ENCODE measurements at regions of chr20 and their contacts with region 1.

Region 1: GRCh38 chr20:37172836-37173235 is 6.3 kb upstream of the RPN2 start:
- DNase-seq: no peak
- H3K4me3 ChIP-seq: no peak overlapping the region
- H3K4me3 Mint-ChIP-seq: no peak overlapping the region
- H3K27ac ChIP-seq: no peak overlapping the region
- H3K27ac Mint-ChIP-seq: no peak overlapping the region
- H3K4me1 ChIP-seq: peaks cover 6% of the 10 kb centered on the region
- H3K4me1 Mint-ChIP-seq: peaks cover 0 to under 1% (median under 1%) of the 10 kb centered on the region in 4 donors
- H3K27me3 ChIP-seq: no peaks in the 10 kb centered on the region
- H3K27me3 Mint-ChIP-seq: no peaks in the 10 kb centered on the region

Region 2: GRCh38 chr20:37185686-37186085 is 12.8 kb after region 1 on chr20:
- CTCF ChIA-PET with region 1: interaction called, 99 read pairs
- POLR2A ChIA-PET with region 1: interaction called, 62 read pairs
- intact Hi-C with region 1: loop called (anchors 1 kb)
- DNase-seq: no peak
- H3K4me3 ChIP-seq: no peak overlapping the region
- H3K4me3 Mint-ChIP-seq: peak overlapping the region in 1 of 8 donors; percentile 30
- H3K27ac ChIP-seq: no peak overlapping the region
- H3K27ac Mint-ChIP-seq: peak overlapping the region in 3 of 7 donors; percentile 27 to 87 (median 30)
- H3K4me1 ChIP-seq: peaks cover 74% of the 10 kb centered on the region
- H3K4me1 Mint-ChIP-seq: peaks cover 49 to 79% (median 63%) of the 10 kb centered on the region in 4 donors
- H3K27me3 ChIP-seq: no peaks in the 10 kb centered on the region
- H3K27me3 Mint-ChIP-seq: no peaks in the 10 kb centered on the region

Measured in CD4-positive, alpha-beta memory T cell (primary cell).